Posterior cingulate gyrus (tissue), 11 donors: ENCODE measurements at regions of chr1 and their contacts with region 1.

Region 1: GRCh38 chr1:215566556-215567490 is at the start of gene KCTD3:
- DNase-seq: peak; percentile 67 to 97 (median 80)

Region 2: GRCh38 chr1:215606564-215607168 is 39.8 kb after region 1 on chr1:
- intact Hi-C with region 1: loop called (anchors 2 kb)
- DNase-seq: no peak

Region 3: GRCh38 chr1:216600730-216601609 is 1034.1 kb after region 1 on chr1:
- intact Hi-C with region 1: loop called (anchors 10 kb)
- DNase-seq: peak; percentile 60 to 97 (median 78)